HEK293T (cell line): ENCODE measurements at regions of chr1 and their contacts with region 1.

Region 1: GRCh38 chr1:27464926-27465647 is 24.9 kb downstream of the WASF2 start:
- DNase-seq: no peak

Region 2: DNA sequence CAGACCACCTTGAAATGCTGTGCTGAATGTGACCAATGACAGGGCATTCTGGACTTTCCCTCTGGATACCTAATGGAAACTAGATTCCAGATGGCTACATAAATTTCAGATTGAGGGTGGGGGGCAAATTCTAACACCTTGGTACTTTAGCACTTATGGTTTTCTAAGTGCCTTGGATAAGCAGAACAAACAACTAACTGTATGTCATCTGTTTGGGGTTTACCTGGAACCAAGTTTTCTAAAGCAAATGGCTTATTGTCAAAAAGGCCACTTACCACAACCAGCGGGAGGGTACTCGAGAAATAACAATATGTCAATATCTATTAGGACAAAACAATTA is 33.5 kb before region 1 on chr1:
- CTCF ChIA-PET with region 1: no interaction called
- POLR2A ChIA-PET with region 1: no interaction called
- DNase-seq: no peak

Region 3: GRCh38 chr1:27489910-27490741 is 25.0 kb after region 1 on chr1 and contains the start of gene WASF2:
- CTCF ChIA-PET with region 1: no interaction called
- POLR2A ChIA-PET with region 1: interaction called, 18 read pairs
- DNase-seq: peak; percentile 93